Head of caudate nucleus (tissue), 42 donors: ENCODE measurements at regions of chr9 and their contacts with region 1.

Region 1: DNA sequence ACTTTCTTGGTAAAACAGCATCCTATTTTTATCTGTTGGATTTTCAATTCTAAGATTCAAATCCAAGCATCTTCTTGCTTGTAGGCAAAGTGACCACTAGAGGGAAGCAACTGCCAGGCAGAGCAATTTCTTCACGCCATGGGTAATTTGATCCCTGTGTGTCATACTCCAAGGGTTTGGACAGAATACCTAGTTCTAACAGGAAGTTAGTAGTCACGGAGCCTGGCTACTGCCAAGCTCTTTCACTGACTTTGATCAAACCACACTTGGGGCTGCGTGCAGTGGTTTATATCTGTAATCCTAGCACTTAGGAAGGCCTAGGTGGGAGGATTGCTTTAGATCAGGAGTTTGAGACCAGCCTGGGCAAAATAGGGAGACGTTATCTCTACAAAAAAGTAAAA is 473.6 kb upstream of the TNC start:
- DNase-seq: peak in 33 of 42 donors; percentile 3 to 73 (median 37)

Region 2: GRCh38 chr9:116656501-116656971 is 1065.0 kb after region 1 on chr9:
- intact Hi-C with region 1: loop called (anchors 10 kb)
- DNase-seq: peak in 14 of 42 donors; percentile 2 to 51 (median 10)